ENCODE measurements at regions of chr12 and their contacts with region 1.

Region 1: GRCh38 chr12:57899010-57899662 is 42.2 kb upstream of the ATP23 start:
- DNase-seq: peak; percentile 95
- H3K4me3 Mint-ChIP-seq: peak overlapping the region; percentile 69
- H3K27ac Mint-ChIP-seq: peak overlapping the region; percentile 99
- H3K4me1 Mint-ChIP-seq: peaks cover 60% of the 10 kb centered on the region
- H3K27me3 Mint-ChIP-seq: no peaks in the 10 kb centered on the region

Region 2: DNA sequence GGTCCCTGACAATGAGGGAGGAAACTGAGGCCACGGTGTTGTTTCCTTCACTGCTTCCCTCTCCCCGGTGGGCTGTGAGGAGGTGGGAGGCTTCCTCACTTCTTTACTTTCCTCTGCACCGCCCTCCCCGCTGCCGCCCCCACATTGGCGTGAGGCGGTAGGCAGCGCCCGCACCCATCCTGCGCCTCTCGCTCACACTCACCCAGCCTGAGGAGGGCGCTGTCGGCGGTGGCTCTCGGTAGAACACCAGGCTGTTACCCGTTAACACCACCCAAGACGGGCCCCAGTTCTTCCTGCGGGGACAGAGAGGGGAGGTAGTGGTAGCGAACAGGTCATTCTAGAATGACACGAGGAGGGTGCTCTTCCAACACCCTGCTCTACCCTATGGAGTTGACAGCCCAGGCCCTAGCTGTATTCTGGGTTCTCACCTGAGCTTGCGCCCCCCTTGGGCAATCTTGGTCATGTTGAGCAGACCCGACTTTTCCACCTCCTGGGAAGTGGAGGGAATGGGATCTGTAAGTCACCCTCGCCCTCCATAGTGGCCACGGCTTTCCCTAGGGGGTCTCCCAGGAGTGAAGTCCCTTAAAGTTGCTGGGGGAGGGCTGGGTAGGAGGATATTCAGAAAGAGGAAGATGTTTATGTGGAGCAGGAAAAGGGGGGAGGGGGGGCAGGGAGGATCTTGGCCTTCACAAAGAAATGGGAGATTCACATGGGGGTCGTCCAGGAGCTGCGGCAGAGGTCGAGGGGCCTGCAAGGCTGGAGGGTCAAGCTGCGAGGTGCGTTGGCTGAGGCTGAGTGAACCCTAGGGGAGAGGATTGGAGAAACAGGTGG is 422.8 kb before region 1 on chr12:
- CTCF ChIA-PET with region 1: no interaction called
- intact Hi-C with region 1: loop called (anchors 2 kb)
- DNase-seq: peak; percentile 94
- H3K4me3 Mint-ChIP-seq: peak overlapping the region; percentile 84
- H3K27ac Mint-ChIP-seq: peak overlapping the region; percentile 99
- H3K4me1 Mint-ChIP-seq: peaks cover 65% of the 10 kb centered on the region
- H3K27me3 Mint-ChIP-seq: no peaks in the 10 kb centered on the region

Region 3: GRCh38 chr12:57751788-57752667 is 147.1 kb before region 1 on chr12 and contains the start of gene CDK4:
- CTCF ChIA-PET with region 1: interaction called, 14 read pairs
- intact Hi-C with region 1: loop called (anchors 1 kb)
- DNase-seq: peak; percentile 99
- H3K4me3 Mint-ChIP-seq: peak within 1 kb of the TSS; percentile 100
- H3K27ac Mint-ChIP-seq: peak within 1 kb of the TSS; percentile 99
- H3K4me1 Mint-ChIP-seq: peaks cover 51% of the 10 kb centered on the region
- H3K27me3 Mint-ChIP-seq: no peaks in the 10 kb centered on the region
- total RNA-seq, gene CDK4: 194 to 202 TPM

Region 4: DNA sequence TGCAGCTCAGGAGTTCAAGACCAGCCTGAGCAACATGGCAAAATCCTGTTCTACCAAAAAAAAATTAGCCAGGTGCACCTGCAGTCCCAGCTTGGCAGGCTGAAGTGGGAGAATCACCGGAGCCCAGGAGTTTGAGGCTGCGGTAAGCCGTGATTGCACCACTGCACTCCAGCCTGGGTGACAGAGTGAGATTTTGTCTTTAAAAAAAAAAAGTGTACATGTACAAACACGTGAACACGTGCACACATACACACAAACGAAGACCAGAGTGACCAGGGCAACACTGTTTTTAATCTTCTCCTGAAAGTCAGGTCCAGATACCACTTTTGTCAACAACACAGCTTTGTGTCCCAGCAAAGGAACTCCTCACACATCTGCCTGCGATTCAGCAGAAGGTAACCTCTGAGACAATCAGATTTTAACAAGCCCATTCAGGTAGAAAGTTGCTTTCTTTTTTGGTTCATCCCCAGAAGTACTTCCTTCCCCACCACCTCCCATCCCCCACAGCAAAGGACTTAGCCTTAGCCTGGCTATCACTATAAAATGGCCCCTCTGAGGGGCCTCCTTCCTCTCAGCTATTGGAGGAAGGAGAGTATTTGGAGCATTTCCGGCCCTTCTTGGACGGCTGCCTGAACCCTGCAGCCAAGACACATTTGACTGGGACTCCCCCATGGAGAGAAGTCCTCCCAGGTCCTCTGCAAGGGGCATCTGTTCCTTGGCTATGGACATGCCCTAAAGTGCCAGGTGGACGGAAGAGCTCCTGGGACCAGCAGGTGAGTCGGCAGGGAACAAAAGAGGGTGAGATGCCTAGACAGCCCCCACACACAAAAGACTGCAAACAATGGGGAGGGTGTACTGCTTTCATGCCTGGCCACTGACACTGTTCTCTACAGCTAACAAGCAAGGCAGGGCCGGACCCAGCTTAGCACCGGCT is 62.4 kb before region 1 on chr12:
- CTCF ChIA-PET with region 1: interaction called, 147 read pairs
- intact Hi-C with region 1: loop called (anchors 1 kb)
- DNase-seq: peak; percentile 81
- H3K4me3 Mint-ChIP-seq: peak overlapping the region; percentile 40
- H3K27ac Mint-ChIP-seq: peak overlapping the region; percentile 89
- H3K4me1 Mint-ChIP-seq: peaks cover 97% of the 10 kb centered on the region
- H3K27me3 Mint-ChIP-seq: no peaks in the 10 kb centered on the region

Region 5: DNA sequence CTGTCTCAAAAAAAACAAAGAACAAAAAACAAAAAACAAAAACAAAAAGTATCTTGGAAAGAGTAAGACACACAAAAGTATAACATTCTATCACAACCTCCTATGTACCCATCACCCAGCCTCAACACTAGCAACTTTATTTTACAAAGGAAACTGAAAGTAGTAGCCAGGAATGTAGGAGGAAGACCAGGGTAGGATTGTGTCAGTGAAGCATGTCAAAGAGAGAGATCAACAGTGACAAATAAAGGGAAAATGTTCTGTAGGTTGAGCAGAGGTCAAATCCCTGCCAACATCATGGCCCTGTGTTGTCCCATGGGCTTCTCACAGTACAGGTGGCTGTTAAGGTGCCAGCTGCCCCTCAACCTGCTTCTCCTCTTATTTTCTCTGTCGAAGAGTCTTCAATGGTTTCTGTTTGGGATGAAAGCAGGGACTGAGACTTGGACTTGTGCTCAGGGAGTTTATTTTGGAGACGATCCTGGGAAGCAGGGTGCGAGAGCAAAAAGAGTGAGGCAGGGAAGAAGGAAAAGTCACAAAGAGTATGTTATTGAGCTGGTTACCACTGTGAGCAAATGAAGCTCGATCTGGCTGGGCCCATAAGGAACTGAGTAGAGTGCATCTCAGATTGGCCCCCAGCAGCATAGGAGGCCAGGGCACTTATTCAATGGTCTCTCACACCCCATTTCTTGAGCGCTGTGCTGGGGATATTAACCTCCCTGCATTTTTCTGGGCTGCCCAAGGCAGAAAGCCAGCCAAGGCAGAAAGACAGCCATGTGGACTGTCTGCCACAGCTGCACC is 23.2 kb before region 1 on chr12:
- CTCF ChIA-PET with region 1: interaction called, 15 read pairs
- intact Hi-C with region 1: no loop called
- DNase-seq: no peak
- H3K4me3 Mint-ChIP-seq: no peak overlapping the region
- H3K27ac Mint-ChIP-seq: no peak overlapping the region
- H3K4me1 Mint-ChIP-seq: peaks cover 7% of the 10 kb centered on the region
- H3K27me3 Mint-ChIP-seq: no peaks in the 10 kb centered on the region

Region 6: GRCh38 chr12:58051378-58051777 is 152.2 kb after region 1 on chr12:
- CTCF ChIA-PET with region 1: no interaction called
- intact Hi-C with region 1: no loop called
- DNase-seq: no peak
- H3K4me3 Mint-ChIP-seq: no peak overlapping the region
- H3K27ac Mint-ChIP-seq: no peak overlapping the region
- H3K4me1 Mint-ChIP-seq: no peaks in the 10 kb centered on the region
- H3K27me3 Mint-ChIP-seq: peaks cover 6% of the 10 kb centered on the region

Region 7: GRCh38 chr12:59595883-59596540 is 1696.9 kb after region 1 on chr12 and contains the start of gene SLC16A7:
- CTCF ChIA-PET with region 1: no interaction called
- intact Hi-C with region 1: loop called (anchors 5 kb)
- DNase-seq: peak; percentile 84
- H3K4me3 Mint-ChIP-seq: peak within 1 kb of the TSS; percentile 89
- H3K27ac Mint-ChIP-seq: peak within 1 kb of the TSS; percentile 98
- H3K4me1 Mint-ChIP-seq: peaks cover 49% of the 10 kb centered on the region
- H3K27me3 Mint-ChIP-seq: no peaks in the 10 kb centered on the region
- total RNA-seq, gene SLC16A7: 27.5 to 27.8 TPM